Right ventricle myocardium inferior (tissue), 1 donor: ENCODE measurements at regions of chr7 and their contacts with region 1.

Region 1: DNA sequence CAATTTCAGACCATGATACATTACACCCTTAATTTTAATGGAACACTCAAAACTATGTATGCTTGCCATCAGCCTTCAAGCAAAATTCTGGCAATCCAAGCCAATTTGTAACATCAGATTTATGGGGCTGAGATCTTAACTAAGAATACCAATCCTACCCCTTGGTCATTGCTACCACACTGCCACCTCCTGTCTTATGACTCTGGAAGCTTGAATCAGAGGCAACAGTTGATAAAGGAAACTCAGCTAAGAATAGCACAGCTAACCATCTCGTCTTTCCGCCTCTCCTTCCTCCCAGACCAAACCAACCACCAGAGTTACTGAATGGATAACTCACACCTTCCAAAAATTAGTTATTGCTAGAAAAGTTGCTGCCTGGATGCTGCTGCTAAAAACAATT is 7.4 kb downstream of the IGF2BP3 start:
- DNase-seq: no peak
- ATAC-seq: peak; percentile 64

Region 2: GRCh38 chr7:23273141-23273599 is 189.7 kb before region 1 on chr7:
- intact Hi-C with region 1: loop called (anchors 5 kb)
- DNase-seq: peak; percentile 90
- ATAC-seq: peak; percentile 88

Region 3: GRCh38 chr7:23662124-23662983 is 199.5 kb after region 1 on chr7:
- intact Hi-C with region 1: no loop called
- DNase-seq: no peak
- ATAC-seq: no peak